ENCODE measurements at regions of chr2 and their contacts with region 1.

Region 1: DNA sequence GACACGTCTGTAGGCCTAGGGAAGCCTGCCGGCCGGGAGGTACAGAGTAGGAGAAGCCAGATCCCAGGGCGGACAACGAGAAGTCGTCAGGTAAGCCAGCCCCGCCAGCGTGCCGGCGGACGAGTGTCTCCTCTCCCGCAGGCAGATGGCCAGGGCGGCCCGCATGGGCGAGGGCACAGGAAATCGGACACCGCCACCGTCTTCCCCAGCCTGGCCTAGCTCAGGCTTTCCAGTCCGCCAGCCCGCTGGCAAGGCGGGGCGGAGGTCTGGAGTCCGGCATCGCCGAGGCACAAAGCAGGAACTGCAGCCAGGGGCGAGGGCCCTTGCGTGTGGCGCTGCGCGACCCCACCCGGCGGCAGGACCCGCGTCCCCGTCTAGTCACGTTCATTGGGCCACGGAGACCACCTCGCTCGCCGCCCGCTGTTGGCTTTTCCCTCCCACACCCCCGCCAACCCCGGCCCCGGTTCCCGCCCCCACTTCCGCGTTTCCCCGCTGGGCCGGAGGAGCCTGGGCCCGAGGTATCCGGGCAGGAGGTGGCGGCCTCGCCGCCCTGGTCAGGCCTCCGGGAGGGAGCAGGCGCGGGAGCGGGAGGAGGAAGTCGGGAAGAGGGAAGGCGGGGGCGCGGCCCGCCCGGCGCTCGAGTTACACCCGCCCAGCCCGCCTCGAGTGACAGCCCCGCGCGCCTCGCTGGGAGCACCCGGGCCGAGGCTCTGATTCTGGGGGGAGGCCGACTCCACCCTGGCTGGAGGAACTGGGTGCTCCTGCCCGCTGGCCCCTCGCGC is at the start of gene GPD2:
- DNase-seq: peak; percentile 28 to 76 (median 62)
- ATAC-seq: peak; percentile 68 to 76
- H3K4me3 Mint-ChIP-seq: peak within 1 kb of the TSS; percentile 90 to 99 (median 94)
- H3K27ac Mint-ChIP-seq: peak within 1 kb of the TSS; percentile 91 to 97 (median 94)
- H3K4me1 Mint-ChIP-seq: peaks cover 17 to 37% (median 35%) of the 10 kb centered on the region in 4 donors
- H3K27me3 Mint-ChIP-seq: no peaks in the 10 kb centered on the region
- polyA plus RNA-seq, gene GPD2: 3.0 to 4.0 (median 3.9) TPM

Region 2: DNA sequence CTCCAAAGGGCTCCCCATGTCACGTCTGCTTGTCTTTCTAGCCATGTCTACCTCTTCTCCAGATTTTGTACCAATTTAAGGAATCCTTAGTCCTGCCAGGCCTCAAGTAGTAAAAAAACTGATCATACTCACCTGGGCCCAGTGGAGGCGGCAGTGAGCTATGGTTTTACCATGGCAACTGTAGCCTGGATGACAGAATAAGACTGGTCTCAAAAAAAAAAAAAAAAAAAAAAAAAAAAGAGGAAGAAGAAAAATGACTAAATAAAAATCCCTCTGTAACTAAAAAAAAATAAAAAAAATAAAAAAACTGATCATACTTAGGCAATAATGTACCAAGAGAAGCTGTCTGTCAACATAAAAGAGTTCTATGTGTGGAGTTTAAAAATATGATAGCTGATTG is 325.0 kb before region 1 on chr2:
- POLR2A ChIA-PET with region 1: no interaction called
- DNase-seq: peak in 3 of 10 donors; percentile 1 to 16 (median 10)
- ATAC-seq: peak in 1 of 2 donors; percentile 35
- H3K4me3 Mint-ChIP-seq: no peak overlapping the region
- H3K27ac Mint-ChIP-seq: no peak overlapping the region
- H3K4me1 Mint-ChIP-seq: no peaks in the 10 kb centered on the region
- H3K27me3 Mint-ChIP-seq: peaks cover 0 to 1% (median 0%) of the 10 kb centered on the region in 5 donors

Region 3: DNA sequence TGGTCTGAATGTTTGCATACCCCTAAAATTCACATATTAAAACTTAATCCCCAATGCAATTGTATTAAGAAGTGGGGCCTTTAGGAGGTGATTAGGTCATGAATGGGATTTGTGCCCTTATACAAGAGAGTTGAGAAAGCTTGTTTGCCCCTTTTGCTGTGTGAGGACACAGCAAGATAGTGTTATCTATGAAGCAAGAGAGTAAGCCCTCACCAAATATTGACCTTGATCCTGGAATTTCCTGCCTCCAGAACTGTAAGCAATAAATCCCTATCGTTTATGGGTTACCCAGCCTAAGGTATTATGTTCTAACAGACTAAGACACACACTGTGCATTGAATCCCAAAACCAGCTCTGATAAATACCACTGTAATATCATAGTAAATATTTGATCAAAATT is 135.6 kb before region 1 on chr2:
- POLR2A ChIA-PET with region 1: no interaction called
- DNase-seq: no peak
- ATAC-seq: no peak
- H3K4me3 Mint-ChIP-seq: no peak overlapping the region
- H3K27ac Mint-ChIP-seq: no peak overlapping the region
- H3K4me1 Mint-ChIP-seq: no peaks in the 10 kb centered on the region
- H3K27me3 Mint-ChIP-seq: peaks cover 21 to 51% (median 27%) of the 10 kb centered on the region in 5 donors

Region 4: GRCh38 chr2:156332534-156333273 is 103.2 kb before region 1 on chr2 and contains the start of gene NR4A2:
- POLR2A ChIA-PET with region 1: interaction called, 32 read pairs
- DNase-seq: peak; percentile 84 to 95 (median 92)
- ATAC-seq: peak; percentile 65 to 67
- H3K4me3 Mint-ChIP-seq: peak within 1 kb of the TSS; percentile 86 to 99 (median 96)
- H3K27ac Mint-ChIP-seq: peak within 1 kb of the TSS; percentile 84 to 100 (median 98)
- H3K4me1 Mint-ChIP-seq: peaks cover 43 to 74% (median 49%) of the 10 kb centered on the region in 4 donors
- H3K27me3 Mint-ChIP-seq: peaks cover 18 to 37% (median 27%) of the 10 kb centered on the region in 5 donors
- polyA plus RNA-seq, gene NR4A2: 4.8 to 20.1 (median 11.4) TPM

Region 5: DNA sequence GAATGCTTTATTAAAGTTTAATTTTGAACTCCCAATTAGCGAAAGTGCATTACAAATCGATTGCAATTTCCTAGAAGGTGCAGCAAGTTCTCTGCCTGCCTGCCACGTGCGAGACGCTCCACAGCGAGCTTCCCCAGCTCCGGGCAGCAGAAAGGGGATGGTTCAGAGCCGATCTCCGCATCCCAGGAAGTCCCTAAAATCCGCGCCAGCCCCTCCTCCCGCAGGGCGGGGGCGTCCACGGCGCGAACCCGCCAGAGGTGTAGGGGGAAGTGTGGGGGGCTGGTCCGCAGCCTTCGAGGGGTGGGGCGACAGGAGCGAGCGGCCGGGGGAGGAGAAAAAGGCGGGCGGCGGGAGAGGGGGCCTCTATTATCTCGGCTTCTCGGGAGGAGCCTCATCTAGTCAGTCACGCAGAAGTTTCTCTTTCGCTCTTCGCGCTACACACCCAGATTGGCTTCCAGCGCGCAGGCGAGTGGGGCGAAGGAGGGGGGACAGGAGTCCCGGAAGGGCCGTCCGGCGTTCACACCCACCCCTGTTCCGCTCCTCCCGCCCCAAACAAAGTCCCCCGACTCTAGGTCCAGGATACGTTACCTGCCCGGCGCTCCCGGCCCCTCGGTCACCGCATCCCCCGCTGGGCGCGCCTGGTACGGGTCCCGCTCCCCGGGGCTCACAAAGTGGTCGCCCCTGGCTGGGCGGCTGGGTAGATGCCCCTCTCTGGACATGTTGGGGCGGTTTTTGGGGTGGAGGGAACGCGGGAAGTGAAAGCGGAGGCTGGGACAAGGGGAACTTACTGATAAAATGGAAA is 94.3 kb before region 1 on chr2:
- POLR2A ChIA-PET with region 1: interaction called, 21 read pairs
- DNase-seq: peak; percentile 81 to 94 (median 87)
- ATAC-seq: peak; percentile 75 to 76
- H3K4me3 Mint-ChIP-seq: peak overlapping the region; percentile 83 to 99 (median 94)
- H3K27ac Mint-ChIP-seq: peak overlapping the region; percentile 88 to 100 (median 96)
- H3K4me1 Mint-ChIP-seq: peaks cover 4 to 46% (median 25%) of the 10 kb centered on the region in 4 donors
- H3K27me3 Mint-ChIP-seq: no peaks in the 10 kb centered on the region